Naive thymus-derived CD4-positive, alpha-beta T cell (primary cell): ENCODE measurements at regions of chr1 and their contacts with region 1.

Region 1: DNA sequence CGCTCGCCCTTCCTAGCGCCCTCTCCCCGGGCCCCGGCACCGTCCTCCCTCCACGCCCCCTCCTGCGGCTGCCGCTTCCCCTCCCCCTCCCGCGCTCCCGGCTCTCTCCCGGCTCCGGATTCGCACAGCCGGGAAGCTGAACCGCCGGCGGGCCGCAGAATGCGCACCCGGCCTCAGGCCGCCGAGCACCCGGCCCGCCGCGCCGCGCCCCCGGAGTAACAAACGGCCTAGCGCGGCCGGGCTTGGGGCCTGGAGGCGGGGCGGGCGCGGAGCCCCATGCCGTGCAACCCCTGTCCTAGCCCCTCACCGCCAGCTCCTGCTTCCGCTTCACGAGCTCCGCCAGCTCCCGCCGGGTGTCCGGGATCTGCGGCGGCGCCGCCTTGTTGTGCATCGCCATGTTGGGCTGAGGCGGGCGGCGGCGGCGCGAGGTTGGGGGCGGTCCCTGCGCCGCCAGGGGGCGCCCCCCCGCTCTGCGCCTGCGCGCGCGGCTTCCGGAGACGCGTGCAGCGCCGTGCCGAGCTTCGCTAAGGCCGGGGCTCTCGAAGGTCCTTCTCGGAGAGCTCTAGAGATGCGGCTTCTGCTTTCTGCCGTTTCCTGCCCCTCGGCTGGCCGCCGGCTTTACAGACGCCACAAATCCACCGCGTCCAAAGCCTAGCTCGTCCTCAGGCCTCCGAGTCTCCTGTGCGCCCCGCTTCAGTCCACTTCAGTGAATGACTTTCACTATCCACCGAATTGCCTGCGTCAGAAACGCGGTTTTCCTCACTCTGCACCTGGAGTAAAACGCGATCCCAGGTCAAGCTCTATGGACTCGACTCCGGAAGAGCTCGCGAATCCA is at the start of gene MEAF6:
- DNase-seq: peak; percentile 76 to 92 (median 87)
- ATAC-seq: peak; percentile 99
- H3K4me3 ChIP-seq: peak within 1 kb of the TSS; percentile 87
- H3K4me3 Mint-ChIP-seq: peak within 1 kb of the TSS; percentile 92 to 99 (median 98)
- H3K27ac ChIP-seq: peak within 1 kb of the TSS; percentile 89
- H3K27ac Mint-ChIP-seq: peak within 1 kb of the TSS; percentile 93 to 99 (median 98)
- H3K4me1 ChIP-seq: peaks cover 16 to 22% of the 10 kb centered on the region in 2 donors
- H3K4me1 Mint-ChIP-seq: peaks cover 10 to 50% (median 43%) of the 10 kb centered on the region in 7 donors
- H3K27me3 ChIP-seq: no peaks in the 10 kb centered on the region
- H3K27me3 Mint-ChIP-seq: peaks cover 0 to 4% (median 0%) of the 10 kb centered on the region in 5 donors
- total RNA-seq, gene MEAF6: 45.0 to 89.5 (median 57.7) TPM

Region 2: DNA sequence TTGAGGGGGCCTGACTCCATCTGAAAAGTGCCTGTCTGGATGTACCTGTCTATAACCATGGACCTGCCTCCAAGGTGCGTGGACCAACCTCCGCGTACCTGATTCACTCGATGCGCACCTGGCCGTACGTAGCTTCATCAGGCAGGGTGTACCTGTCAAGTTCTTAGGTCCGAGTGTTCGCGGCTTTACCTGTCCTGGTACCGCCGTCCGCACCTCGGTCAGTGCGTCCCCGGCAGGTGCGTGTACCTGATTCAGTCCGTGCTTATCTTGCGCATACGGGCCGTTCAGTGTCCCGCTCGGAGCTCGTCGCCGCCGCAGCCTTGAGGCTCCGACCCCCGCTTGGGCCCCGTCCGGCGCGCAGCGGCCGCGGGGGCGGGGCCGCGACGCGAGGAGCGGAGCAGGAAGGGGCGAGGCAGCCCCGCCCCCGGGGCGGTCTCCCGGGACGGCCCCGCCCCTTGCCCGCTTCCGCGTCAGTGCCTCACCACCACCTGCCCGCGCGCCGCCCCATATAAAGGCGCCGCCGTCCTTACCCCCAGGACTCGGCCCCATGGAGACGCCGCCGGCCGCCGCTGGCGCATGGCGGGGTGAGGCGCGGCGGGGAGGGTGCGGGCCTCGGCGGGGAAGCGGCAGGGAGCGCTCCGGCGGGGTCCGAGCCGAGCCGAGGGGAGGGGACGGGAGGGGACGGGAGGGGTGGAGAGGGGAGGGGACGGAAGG is 40.4 kb before region 1 on chr1 and contains the start of gene ZC3H12A:
- CTCF ChIA-PET with region 1: interaction called, 4 read pairs
- POLR2A ChIA-PET with region 1: interaction called, 52 read pairs
- intact Hi-C with region 1: loop called (anchors 1 to 2 kb)
- DNase-seq: peak; percentile 87 to 98 (median 93)
- ATAC-seq: peak; percentile 82
- H3K4me3 ChIP-seq: peak within 1 kb of the TSS; percentile 97
- H3K4me3 Mint-ChIP-seq: peak within 1 kb of the TSS; percentile 91 to 99 (median 96)
- H3K27ac ChIP-seq: peak within 1 kb of the TSS; percentile 95
- H3K27ac Mint-ChIP-seq: peak within 1 kb of the TSS; percentile 93 to 99 (median 98)
- H3K4me1 ChIP-seq: peaks cover 28 to 33% of the 10 kb centered on the region in 2 donors
- H3K4me1 Mint-ChIP-seq: peaks cover 43 to 59% (median 54%) of the 10 kb centered on the region in 7 donors
- H3K27me3 ChIP-seq: no peaks in the 10 kb centered on the region
- H3K27me3 Mint-ChIP-seq: no peaks in the 10 kb centered on the region
- total RNA-seq, gene ZC3H12A: 35.0 to 122 (median 46.7) TPM

Region 3: DNA sequence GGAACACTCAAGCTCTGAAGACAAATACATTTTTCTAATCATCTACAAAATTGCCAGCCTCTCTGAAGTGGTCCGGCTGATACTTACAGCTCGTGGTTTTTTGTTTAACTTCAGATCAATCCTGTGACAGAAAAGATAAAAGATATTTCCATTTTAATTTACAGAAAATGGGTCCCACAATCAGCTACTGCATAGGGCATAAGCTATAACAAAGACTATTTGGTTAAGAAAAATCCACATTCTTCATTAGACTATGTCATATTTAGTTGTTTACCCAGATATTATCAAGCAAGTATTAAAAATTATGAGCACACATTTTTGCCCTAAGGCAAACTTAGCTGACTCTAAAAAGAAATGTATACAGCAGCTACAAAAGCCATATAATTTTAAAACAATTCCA is 18.8 kb before region 1 on chr1:
- CTCF ChIA-PET with region 1: interaction called, 3 read pairs
- POLR2A ChIA-PET with region 1: interaction called, 11 read pairs
- intact Hi-C with region 1: no loop called
- DNase-seq: no peak
- ATAC-seq: no peak
- H3K4me3 ChIP-seq: no peak overlapping the region
- H3K4me3 Mint-ChIP-seq: no peak overlapping the region
- H3K27ac ChIP-seq: no peak overlapping the region
- H3K27ac Mint-ChIP-seq: peak overlapping the region in 3 of 9 donors; percentile 26 to 62 (median 50)
- H3K4me1 ChIP-seq: no peaks in the 10 kb centered on the region
- H3K4me1 Mint-ChIP-seq: peaks cover 0 to 24% (median 8%) of the 10 kb centered on the region in 7 donors
- H3K27me3 ChIP-seq: no peaks in the 10 kb centered on the region
- H3K27me3 Mint-ChIP-seq: no peaks in the 10 kb centered on the region

Region 4: DNA sequence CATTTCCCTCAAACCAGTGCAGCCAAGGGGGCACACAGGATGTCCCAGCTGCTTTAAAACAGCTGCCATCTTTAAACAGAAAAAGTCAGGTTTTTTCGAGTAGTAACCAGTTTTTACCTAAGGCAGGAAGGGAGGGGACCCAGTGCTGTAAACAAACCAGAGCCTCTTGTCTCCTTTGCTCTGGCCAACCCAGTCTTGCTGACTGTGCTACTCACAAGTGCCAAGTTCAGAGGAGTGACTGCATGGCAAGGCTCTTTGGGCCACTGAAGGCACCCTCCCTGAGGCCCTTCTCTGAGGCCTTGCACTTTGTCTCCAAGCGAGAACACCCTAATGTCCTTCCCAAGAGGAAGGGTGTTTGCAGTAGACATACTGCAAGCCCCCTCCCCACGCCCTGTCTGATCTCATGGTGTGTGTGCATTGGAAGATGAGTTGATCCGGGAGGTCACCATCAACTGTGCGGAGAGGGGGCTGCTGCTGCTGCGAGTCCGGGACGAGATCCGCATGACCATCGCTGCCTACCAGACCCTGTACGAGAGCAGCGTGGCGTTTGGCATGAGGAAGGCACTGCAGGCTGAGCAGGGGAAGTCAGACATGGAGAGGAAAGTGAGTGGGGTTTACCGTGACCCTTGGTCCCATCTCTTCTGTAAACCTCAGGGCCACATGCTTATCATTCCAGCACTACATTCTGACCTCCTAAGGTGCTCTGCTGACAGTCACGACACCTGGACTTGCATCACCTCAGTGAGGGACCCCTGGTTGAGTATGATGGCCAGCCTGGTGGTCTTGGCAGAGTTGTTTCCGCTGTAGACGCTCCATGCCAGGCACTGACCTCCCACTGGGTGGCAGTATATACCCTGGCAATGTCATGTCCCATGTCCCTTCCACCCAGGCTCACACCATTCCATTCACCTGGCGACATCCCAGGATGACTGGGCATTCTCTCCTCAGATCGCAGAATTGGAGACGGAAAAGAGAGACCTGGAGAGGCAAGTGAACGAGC is 46.9 kb after region 1 on chr1:
- CTCF ChIA-PET with region 1: no interaction called
- POLR2A ChIA-PET with region 1: no interaction called
- intact Hi-C with region 1: no loop called
- DNase-seq: peak in 5 of 9 donors; percentile 11 to 33 (median 17)
- ATAC-seq: peak; percentile 57
- H3K4me3 ChIP-seq: no peak overlapping the region
- H3K4me3 Mint-ChIP-seq: no peak overlapping the region
- H3K27ac ChIP-seq: no peak overlapping the region
- H3K27ac Mint-ChIP-seq: peak overlapping the region in 7 of 9 donors; percentile 12 to 72 (median 56)
- H3K4me1 ChIP-seq: no peaks in the 10 kb centered on the region
- H3K4me1 Mint-ChIP-seq: peaks cover 0 to 5% (median 0%) of the 10 kb centered on the region in 7 donors
- H3K27me3 ChIP-seq: no peaks in the 10 kb centered on the region
- H3K27me3 Mint-ChIP-seq: peaks cover 0 to 6% (median 0%) of the 10 kb centered on the region in 5 donors

Region 5: GRCh38 chr1:37682334-37682987 is 167.9 kb after region 1 on chr1:
- CTCF ChIA-PET with region 1: interaction called, 10 read pairs
- POLR2A ChIA-PET with region 1: interaction called, 4 read pairs
- intact Hi-C with region 1: loop called in 1 of 2 experiments (anchors 2 kb)
- DNase-seq: peak; percentile 61 to 80 (median 74)
- ATAC-seq: peak; percentile 95
- H3K4me3 ChIP-seq: no peak overlapping the region
- H3K4me3 Mint-ChIP-seq: no peak overlapping the region
- H3K27ac ChIP-seq: no peak overlapping the region
- H3K27ac Mint-ChIP-seq: peak overlapping the region in 6 of 9 donors; percentile 61 to 93 (median 75)
- H3K4me1 ChIP-seq: no peaks in the 10 kb centered on the region
- H3K4me1 Mint-ChIP-seq: peaks cover 0 to 9% (median 4%) of the 10 kb centered on the region in 7 donors
- H3K27me3 ChIP-seq: no peaks in the 10 kb centered on the region
- H3K27me3 Mint-ChIP-seq: peaks cover 0 to 3% (median 0%) of the 10 kb centered on the region in 5 donors